CD8-positive, alpha-beta T cell (primary cell): ENCODE measurements at regions of chr15 and their contacts with region 1.

Region 1: DNA sequence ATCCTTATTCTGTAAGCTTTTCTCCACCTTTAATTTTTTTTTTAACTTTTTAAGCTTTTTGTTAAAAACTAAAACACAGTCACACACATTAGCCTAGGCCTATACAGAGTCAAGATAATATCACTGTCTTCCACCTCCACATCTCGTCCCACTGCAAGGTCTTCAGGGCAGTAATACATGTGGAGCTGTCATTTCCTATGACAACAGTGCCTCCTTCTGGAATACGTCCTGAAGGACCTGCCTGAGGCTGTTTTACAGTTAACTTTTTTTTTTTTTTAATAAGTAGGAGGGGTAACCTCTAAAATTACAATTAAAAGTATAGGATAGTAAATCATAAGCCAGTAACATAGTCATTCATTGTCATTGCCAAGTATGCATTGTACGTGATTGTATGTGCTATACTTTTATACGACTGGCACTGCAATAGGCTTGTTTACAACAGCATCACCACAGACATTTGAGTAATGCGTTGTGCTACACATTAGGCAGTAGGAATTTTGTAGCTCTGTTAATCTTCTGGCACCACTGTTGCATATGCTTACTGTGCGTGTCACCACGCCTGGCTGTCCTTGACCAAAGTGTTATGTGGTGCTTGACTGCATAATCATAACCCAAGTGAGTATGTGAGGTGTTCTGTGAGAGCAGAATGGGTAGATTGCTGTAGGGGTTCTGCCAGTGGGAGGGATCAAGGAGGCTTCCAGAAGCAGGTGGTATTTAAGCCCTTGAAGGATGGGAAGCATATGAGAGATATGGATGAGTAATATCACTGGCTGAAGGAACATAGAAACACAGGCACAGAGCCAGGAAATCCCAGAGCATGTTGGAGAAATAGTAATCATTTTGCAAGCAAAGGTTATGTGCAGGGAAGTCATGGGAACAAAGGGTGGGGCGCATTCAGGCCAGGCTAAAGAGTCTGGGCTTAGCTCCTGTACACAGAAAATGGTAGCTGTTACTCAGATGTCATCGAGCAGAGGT is 18.3 kb downstream of the FBXO22 start:
- DNase-seq: peak in 2 of 9 experiments; percentile 45 to 57
- ATAC-seq: peak; percentile 40
- H3K4me3 ChIP-seq: no peak overlapping the region
- H3K4me3 Mint-ChIP-seq: no peak overlapping the region
- H3K27ac ChIP-seq: no peak overlapping the region
- H3K27ac Mint-ChIP-seq: peak overlapping the region; percentile 19
- H3K4me1 ChIP-seq: no peaks in the 10 kb centered on the region
- H3K4me1 Mint-ChIP-seq: peaks cover 33% of the 10 kb centered on the region
- H3K27me3 ChIP-seq: no peaks in the 10 kb centered on the region
- H3K27me3 Mint-ChIP-seq: no peaks in the 10 kb centered on the region
- CTCF ChIP-seq: no peak

Region 2: DNA sequence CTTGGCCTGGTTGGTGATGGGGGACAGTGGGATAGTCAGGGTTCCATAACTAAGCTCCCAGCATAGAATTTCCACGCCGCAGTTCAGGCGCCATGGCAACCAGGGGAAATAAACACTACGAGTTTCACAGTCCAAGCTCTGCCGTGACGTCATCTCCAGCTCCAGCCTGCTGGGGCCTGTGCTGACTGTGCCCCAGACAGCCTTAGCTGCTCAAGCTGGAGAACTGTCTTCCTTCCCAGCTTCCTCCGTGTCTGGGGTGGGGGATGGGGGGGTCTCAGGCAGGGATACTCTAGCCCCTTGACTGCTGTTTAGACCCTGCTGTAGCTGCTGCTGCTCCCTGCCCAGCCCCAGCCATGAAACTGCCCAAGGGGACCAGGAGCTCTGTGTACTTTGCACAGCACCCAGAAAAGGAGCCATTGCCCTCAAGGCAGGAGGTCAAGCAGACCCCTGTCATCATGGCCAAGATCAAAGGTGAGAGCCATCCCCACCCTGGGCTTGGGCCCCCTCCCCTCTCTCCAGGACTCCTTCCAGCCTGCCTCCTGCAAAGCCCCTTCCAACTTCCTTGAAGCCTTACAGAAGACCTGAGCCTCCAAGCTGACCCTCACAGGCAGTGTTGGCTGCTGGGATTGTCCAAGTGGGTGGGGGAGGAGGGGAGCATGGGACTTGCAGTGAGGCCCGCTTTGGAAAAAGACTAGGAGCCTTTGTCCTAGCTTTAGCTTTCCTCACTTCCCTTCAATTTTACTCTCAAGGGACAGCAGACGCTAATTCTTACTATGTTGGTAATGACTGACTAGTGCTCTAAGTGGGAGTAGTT is 198.0 kb before region 1 on chr15:
- CTCF ChIA-PET with region 1: interaction called, 4 read pairs
- POLR2A ChIA-PET with region 1: no interaction called
- intact Hi-C with region 1: loop called (anchors 1 to 2 kb)
- DNase-seq: peak in 5 of 9 experiments; percentile 15 to 57 (median 23)
- ATAC-seq: no peak
- H3K4me3 ChIP-seq: no peak overlapping the region
- H3K4me3 Mint-ChIP-seq: no peak overlapping the region
- H3K27ac ChIP-seq: no peak overlapping the region
- H3K27ac Mint-ChIP-seq: no peak overlapping the region
- H3K4me1 ChIP-seq: no peaks in the 10 kb centered on the region
- H3K4me1 Mint-ChIP-seq: no peaks in the 10 kb centered on the region
- H3K27me3 ChIP-seq: no peaks in the 10 kb centered on the region
- H3K27me3 Mint-ChIP-seq: peaks cover 16% of the 10 kb centered on the region
- CTCF ChIP-seq: no peak